CD8-positive, alpha-beta T cell (primary cell): ENCODE measurements at regions of chr6 and their contacts with region 1.

Region 1: GRCh38 chr6:27388293-27389197 is at the start of gene ZNF391:
- DNase-seq: peak; percentile 41 to 86 (median 67)
- ATAC-seq: peak; percentile 90
- H3K4me3 ChIP-seq: peak within 1 kb of the TSS; percentile 66 to 72
- H3K4me3 Mint-ChIP-seq: peak within 1 kb of the TSS; percentile 98
- H3K27ac ChIP-seq: peak within 1 kb of the TSS; percentile 45 to 55
- H3K27ac Mint-ChIP-seq: peak within 1 kb of the TSS; percentile 94
- H3K4me1 ChIP-seq: peaks cover 9% of the 10 kb centered on the region
- H3K4me1 Mint-ChIP-seq: peaks cover 15% of the 10 kb centered on the region
- H3K27me3 ChIP-seq: no peaks in the 10 kb centered on the region
- H3K27me3 Mint-ChIP-seq: no peaks in the 10 kb centered on the region
- CTCF ChIP-seq: no peak
- total RNA-seq, gene ZNF391: 0.72 to 1.1 TPM

Region 2: DNA sequence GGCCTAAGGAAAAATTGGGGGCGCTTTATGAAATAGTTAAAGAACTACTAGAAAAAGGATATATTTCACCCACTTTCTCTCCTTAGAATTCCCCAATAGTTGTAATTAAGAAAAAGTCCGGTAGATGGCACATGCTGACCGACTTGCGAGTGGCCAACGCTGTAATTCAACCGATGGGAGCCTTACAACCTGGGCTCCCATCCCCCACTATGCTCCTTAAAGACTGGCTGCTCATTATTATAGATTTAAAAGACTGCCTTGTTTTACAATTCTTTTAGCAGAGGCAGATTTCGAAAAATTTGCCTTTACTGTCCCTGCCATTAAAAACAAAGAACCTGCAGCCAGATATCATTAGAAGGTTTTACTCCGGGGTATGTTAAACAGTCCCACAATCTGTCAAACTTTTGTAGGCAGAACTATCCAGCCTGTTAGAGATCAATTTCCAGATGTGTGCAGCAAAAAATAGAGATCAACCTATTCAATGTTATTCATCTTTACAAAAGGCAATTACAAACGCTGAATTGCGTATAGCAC is 199.6 kb before region 1 on chr6:
- CTCF ChIA-PET with region 1: no interaction called
- POLR2A ChIA-PET with region 1: no interaction called
- intact Hi-C with region 1: loop called in 1 of 2 experiments (anchors 10 kb)
- DNase-seq: peak in 8 of 9 experiments; percentile 24 to 86 (median 50)
- ATAC-seq: peak; percentile 77
- H3K4me3 ChIP-seq: peak overlapping the region; percentile 58 to 62
- H3K4me3 Mint-ChIP-seq: peak overlapping the region; percentile 87
- H3K27ac ChIP-seq: peak overlapping the region in 1 of 2 experiments; percentile 33
- H3K27ac Mint-ChIP-seq: no peak overlapping the region
- H3K4me1 ChIP-seq: peaks cover 4% of the 10 kb centered on the region
- H3K4me1 Mint-ChIP-seq: peaks cover 10% of the 10 kb centered on the region
- H3K27me3 ChIP-seq: no peaks in the 10 kb centered on the region
- H3K27me3 Mint-ChIP-seq: no peaks in the 10 kb centered on the region
- CTCF ChIP-seq: peak; percentile 66

Region 3: DNA sequence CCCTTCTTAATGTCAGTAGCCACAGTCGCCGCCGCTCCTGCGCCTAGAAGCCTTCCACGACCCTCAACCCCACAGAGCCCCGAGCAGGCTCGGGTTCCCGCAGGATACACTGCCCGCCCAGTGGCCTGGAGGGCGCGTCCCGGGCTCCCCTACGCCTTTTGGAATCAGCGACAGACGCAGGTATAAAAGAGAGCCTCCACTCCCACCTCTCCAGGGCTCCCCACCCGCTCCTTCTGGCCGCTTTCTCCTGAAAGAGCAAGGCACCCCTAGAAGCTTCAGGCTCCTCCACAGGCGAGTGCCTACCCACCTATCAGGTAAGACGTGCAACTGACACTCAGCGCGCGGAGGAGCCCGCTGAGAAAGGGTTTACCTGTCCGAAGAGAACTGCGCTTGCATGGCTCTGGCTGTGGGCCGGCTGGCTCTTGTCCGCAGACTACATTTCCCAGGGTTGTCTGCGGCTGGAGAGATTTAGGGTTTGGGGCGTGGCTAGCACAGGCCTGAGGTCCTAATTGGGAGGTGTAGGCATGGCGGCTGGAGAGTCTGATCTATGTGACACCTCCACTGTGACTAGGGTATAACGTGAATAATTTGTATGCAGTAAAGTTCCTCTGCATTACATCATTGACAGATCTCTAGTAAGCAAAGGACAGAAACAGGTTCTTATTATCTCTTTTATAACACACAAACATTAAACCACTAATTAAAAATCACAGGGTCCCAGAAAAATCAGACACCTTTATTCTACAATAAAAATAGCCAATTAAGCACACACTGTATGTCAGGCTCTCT is 13.5 kb before region 1 on chr6:
- CTCF ChIA-PET with region 1: interaction called, 3 read pairs
- POLR2A ChIA-PET with region 1: no interaction called
- intact Hi-C with region 1: loop called in 1 of 2 experiments (anchors 1 kb)
- DNase-seq: peak; percentile 43 to 85 (median 69)
- ATAC-seq: peak; percentile 98
- H3K4me3 ChIP-seq: peak overlapping the region; percentile 58 to 68
- H3K4me3 Mint-ChIP-seq: peak overlapping the region; percentile 96
- H3K27ac ChIP-seq: peak overlapping the region; percentile 13 to 48
- H3K27ac Mint-ChIP-seq: peak overlapping the region; percentile 92
- H3K4me1 ChIP-seq: peaks cover 12% of the 10 kb centered on the region
- H3K4me1 Mint-ChIP-seq: peaks cover 21% of the 10 kb centered on the region
- H3K27me3 ChIP-seq: no peaks in the 10 kb centered on the region
- H3K27me3 Mint-ChIP-seq: peaks cover 8% of the 10 kb centered on the region
- CTCF ChIP-seq: no peak